GM10248 (cell line): ENCODE measurements at regions of chr11 and their contacts with region 1.

Region 1: DNA sequence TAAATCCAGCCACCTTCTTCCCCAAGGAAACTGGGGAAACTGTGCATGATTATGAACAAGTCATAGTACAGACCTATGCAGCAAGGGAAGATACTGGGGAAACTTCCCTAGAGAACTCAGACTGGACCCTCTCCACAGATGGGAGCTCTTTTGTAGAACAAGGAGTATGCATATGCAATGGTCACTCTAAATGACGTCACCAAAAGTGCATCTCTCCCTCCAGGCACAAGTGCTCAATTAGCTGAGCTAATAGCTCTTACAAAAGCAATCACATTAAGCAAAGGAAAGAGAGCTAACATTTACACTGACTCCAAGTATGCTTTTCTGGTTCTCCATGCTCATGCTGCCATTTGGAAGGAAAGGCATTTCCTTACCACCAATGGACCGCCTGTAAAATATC is 13.0 kb downstream of the APIP start:
- DNase-seq: no peak
- CTCF ChIP-seq: no peak

Region 2: GRCh38 chr11:34869426-34869825 is 33.7 kb before region 1 on chr11:
- CTCF ChIA-PET with region 1: no interaction called
- POLR2A ChIA-PET with region 1: no interaction called
- DNase-seq: no peak
- CTCF ChIP-seq: no peak

Region 3: GRCh38 chr11:34890812-34891211 is 12.3 kb before region 1 on chr11:
- CTCF ChIA-PET with region 1: interaction called, 13 read pairs
- POLR2A ChIA-PET with region 1: no interaction called
- DNase-seq: peak; percentile 21
- CTCF ChIP-seq: peak; percentile 39